ENCODE measurements at regions of chr6 and their contacts with region 1.

Region 1: GRCh38 chr6:159726918-159727716 is at the start of gene WTAP:
- DNase-seq: peak; percentile 95
- H3K4me3 Mint-ChIP-seq: peak within 1 kb of the TSS; percentile 94
- H3K27ac Mint-ChIP-seq: peak within 1 kb of the TSS; percentile 99
- H3K4me1 Mint-ChIP-seq: peaks cover 38% of the 10 kb centered on the region
- H3K27me3 Mint-ChIP-seq: no peaks in the 10 kb centered on the region
- total RNA-seq, gene WTAP: 110 and 114 TPM in 2 replicates

Region 2: DNA sequence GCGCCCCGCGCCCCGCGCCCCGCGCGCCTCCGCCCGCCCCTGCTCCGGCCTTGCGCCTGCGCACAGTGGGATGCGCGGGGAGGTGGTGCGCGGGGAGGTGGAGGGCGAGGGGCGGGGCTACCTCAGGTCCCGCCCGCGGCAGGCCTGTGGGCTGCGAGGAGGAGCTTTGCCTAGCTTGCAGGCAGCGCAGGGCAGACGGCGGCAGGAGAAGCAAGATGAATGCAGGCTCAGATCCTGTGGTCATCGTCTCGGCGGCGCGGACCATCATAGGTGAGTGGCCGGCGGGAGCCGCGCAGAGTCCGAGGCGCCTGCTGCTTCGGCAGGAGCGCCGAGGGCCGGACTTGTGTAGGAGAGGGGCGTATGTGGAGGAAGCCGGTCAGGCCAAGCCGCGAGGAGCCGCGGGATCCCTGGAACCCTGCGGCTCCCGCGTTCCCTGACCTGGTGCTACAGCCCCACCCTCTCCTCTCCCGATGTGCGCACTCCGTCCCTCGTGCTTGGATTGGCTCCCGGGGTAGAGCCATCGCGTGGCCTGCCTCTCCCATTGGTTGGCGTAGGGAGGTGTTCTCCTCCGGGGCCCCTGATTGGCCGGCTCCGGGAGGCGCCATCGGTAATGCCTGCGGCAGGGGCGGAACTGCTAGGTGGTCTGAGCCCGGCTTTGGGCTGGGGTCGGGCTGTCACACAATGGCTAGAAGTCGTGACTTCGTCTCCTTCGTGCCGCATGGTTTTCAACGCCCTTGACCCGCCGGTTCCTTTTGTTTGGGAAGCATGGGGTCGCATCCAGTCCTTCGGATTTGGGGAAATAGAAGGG is 35.0 kb after region 1 on chr6 and contains the start of gene ACAT2:
- intact Hi-C with region 1: loop called (anchors 1 kb)
- DNase-seq: peak; percentile 91
- H3K4me3 Mint-ChIP-seq: peak within 1 kb of the TSS; percentile 93
- H3K27ac Mint-ChIP-seq: peak within 1 kb of the TSS; percentile 93
- H3K4me1 Mint-ChIP-seq: peaks cover 46% of the 10 kb centered on the region
- H3K27me3 Mint-ChIP-seq: no peaks in the 10 kb centered on the region
- total RNA-seq, gene ACAT2: 108 and 109 TPM in 2 replicates

Region 3: DNA sequence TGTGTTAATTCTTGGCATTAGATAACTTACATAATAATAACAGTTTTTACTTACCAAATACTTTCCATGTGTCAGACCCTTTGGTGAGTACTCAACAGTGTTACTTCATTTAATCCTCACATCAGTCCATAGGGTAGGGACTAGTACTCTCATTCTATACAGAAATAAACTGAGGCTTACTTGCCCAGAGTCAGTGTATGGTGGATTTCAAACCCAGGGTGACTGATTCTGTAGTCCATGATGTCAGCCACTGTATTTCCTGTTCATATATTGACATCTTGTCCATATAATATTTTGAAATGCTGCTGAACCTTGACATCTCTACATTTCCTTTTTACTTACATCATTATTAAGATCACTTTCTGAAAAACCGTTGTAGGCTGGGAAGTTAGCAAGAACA is 70.4 kb after region 1 on chr6:
- intact Hi-C with region 1: no loop called
- DNase-seq: no peak
- H3K4me3 Mint-ChIP-seq: no peak overlapping the region
- H3K27ac Mint-ChIP-seq: no peak overlapping the region
- H3K4me1 Mint-ChIP-seq: peaks cover 11% of the 10 kb centered on the region
- H3K27me3 Mint-ChIP-seq: no peaks in the 10 kb centered on the region

Region 4: DNA sequence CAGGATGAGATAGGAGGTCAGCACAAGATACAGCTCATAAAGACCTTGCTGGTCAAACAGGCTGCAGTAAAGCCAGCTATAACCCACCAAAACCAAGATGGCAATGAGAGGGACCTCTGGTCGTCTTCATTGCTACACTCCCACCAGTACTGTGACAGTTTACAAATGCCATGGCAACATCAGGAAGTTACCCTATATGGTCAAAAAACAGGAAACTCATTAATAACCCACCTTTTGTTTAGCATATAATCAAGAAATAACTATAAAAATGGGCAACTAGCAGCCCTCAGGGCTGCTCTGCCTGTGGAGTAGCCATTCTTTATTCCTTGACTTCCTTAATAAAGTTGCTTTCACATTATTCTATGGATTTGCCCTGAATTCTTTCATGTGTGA is 500.6 kb after region 1 on chr6:
- intact Hi-C with region 1: no loop called
- DNase-seq: no peak
- H3K4me3 Mint-ChIP-seq: no peak overlapping the region
- H3K27ac Mint-ChIP-seq: no peak overlapping the region
- H3K4me1 Mint-ChIP-seq: peaks cover 5% of the 10 kb centered on the region
- H3K27me3 Mint-ChIP-seq: no peaks in the 10 kb centered on the region

Measured in activated T-helper 2 cell treated with anti-CD3 and anti-CD28 coated beads, Interferon-gamma antibody, Interleukin-2, Interleukin-4, amounts not matched to agents 10 μg/mL and 5 μg/mL and 100 μg/mL, durations not matched to agents 14 hours and 24 hours and 36 hours (primary cell).